ENCODE measurements at regions of chr1 and their contacts with region 1.

Region 1: GRCh38 chr1:207885129-207886032 is 25.5 kb downstream of the CD34 start:
- DNase-seq: peak; percentile 82
- H3K4me3 ChIP-seq: no peak overlapping the region; a peak in 1 of 4 replicates
- H3K27ac ChIP-seq: no peak overlapping the region
- H3K4me1 ChIP-seq: peaks cover 10 to 14% of the 10 kb centered on the region in 2 experiments
- H3K27me3 ChIP-seq: no peaks in the 10 kb centered on the region; the same call in 1 of the 2 replicates
- CTCF ChIP-seq: peak; percentile 95
- EP300 ChIP-seq: no peak
- RAD21 ChIP-seq: peak; percentile 91

Region 2: GRCh38 chr1:207868774-207869721 is 16.3 kb before region 1 on chr1:
- CTCF ChIA-PET with region 1: interaction called, 181 read pairs
- POLR2A ChIA-PET with region 1: no interaction called
- DNase-seq: peak; percentile 93
- H3K4me3 ChIP-seq: peak overlapping the region; percentile 78 to 85
- H3K27ac ChIP-seq: peak overlapping the region in 1 of 2 experiments; percentile 47; a peak in 1 of 4 replicates
- H3K4me1 ChIP-seq: peaks cover 0 to 32% of the 10 kb centered on the region in 2 experiments; a peak in 1 of 4 replicates
- H3K27me3 ChIP-seq: no peaks in the 10 kb centered on the region
- CTCF ChIP-seq: peak; percentile 62
- EP300 ChIP-seq: no peak
- RAD21 ChIP-seq: peak; percentile 54; the same call in 1 of the 2 replicates

Region 3: GRCh38 chr1:207910591-207911354 is 25.4 kb after region 1 on chr1 and contains the start of gene CD34:
- CTCF ChIA-PET with region 1: interaction called, 12 read pairs
- POLR2A ChIA-PET with region 1: no interaction called
- DNase-seq: peak; percentile 76
- H3K4me3 ChIP-seq: peak within 1 kb of the TSS; percentile 43 to 46
- H3K27ac ChIP-seq: no peak within 1 kb of the TSS
- H3K4me1 ChIP-seq: peaks cover 0 to 4% of the 10 kb centered on the region in 2 experiments; a peak in 1 of 4 replicates
- H3K27me3 ChIP-seq: peaks cover 11% of the 10 kb centered on the region; the same call in 1 of the 2 replicates
- CTCF ChIP-seq: no peak
- EP300 ChIP-seq: no peak
- RAD21 ChIP-seq: no peak
- polyA plus RNA-seq, gene CD34: 0.59 and 0.62 TPM in 2 replicates

Region 4: GRCh38 chr1:207952617-207953542 is 67.5 kb after region 1 on chr1:
- CTCF ChIA-PET with region 1: interaction called, 22 read pairs
- POLR2A ChIA-PET with region 1: no interaction called
- DNase-seq: no peak
- H3K4me3 ChIP-seq: no peak overlapping the region
- H3K27ac ChIP-seq: no peak overlapping the region
- H3K4me1 ChIP-seq: no peaks in the 10 kb centered on the region; a peak in 1 of 4 replicates
- H3K27me3 ChIP-seq: no peaks in the 10 kb centered on the region; the same call in 1 of the 2 replicates
- CTCF ChIP-seq: no peak
- EP300 ChIP-seq: no peak
- RAD21 ChIP-seq: no peak

Region 5: DNA sequence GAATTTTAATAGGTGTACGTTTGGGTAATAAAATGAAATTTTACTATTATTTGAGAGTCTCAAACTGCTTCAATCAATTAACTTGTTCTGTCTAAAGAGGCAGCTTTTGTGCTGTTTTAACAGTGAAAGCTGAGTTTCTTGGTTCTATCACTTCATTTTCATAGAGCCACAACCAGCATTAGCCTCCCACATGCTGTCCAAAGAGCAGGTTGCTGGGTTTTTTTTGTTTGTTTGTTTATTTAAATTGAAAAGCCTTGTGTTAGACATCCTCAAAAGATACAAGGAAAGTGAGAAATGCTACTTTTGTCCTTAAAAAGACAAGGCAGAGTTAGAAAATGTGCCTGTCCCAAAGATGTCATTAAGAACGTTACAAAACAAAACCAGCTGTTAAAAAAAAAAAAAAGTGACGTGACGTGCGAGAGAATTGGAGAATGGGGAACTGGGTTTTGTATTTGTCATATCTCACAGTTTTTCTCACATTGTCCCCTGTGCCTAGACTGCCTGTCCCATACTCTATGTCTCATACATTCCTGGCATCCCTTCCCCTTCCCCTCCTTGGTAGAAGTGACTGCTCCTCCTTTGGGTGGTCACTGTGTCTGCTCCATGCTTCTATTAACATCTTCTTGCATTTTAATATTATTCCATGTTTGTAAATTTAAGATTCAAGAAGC is 88.7 kb after region 1 on chr1:
- CTCF ChIA-PET with region 1: interaction called, 29 read pairs
- POLR2A ChIA-PET with region 1: no interaction called
- DNase-seq: no peak
- H3K4me3 ChIP-seq: no peak overlapping the region
- H3K27ac ChIP-seq: no peak overlapping the region
- H3K4me1 ChIP-seq: no peaks in the 10 kb centered on the region; a peak in 1 of 4 replicates
- H3K27me3 ChIP-seq: no peaks in the 10 kb centered on the region
- CTCF ChIP-seq: no peak
- EP300 ChIP-seq: no peak
- RAD21 ChIP-seq: no peak

Region 6: DNA sequence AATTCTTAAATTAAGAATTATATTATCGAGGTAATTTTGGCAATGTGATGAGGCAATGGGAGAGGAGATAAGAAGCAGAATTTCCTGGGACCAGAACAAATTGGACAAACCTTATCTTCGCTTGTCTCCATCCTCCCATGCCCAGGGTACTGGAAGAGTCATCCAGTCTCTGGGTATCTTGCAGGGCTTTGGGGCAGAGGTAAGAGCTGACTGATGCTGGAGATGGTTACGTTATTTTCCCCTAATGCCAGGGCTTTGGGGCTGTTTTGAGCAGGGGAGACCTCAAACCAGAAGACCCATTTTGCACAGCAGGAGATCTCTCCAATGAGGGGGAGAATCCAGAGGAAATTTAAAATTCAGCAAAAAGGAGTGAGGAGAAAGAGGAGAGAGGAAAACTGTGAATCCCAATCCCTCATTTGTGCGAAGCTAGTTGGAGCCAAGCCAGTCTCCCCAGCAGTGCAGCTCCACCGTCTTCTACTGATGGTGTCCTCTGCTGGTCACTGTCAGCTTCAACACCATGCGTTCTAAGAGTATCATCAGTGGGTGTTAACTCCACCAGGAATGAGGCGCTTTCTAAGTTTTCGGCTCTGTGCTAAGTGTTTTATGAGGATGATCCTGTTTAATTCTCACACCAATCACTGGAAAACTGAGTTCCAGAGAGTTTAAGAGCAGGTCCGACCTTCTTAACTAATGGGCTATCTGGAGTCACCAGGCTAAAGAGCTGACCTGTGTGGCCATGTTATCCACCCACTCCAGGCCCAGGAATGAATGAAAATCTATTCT is 112.3 kb after region 1 on chr1:
- CTCF ChIA-PET with region 1: interaction called, 35 read pairs
- POLR2A ChIA-PET with region 1: no interaction called
- DNase-seq: peak; percentile 74
- H3K4me3 ChIP-seq: no peak overlapping the region
- H3K27ac ChIP-seq: no peak overlapping the region
- H3K4me1 ChIP-seq: peaks cover 0 to 3% of the 10 kb centered on the region in 2 experiments; a peak in 2 of 4 replicates
- H3K27me3 ChIP-seq: no peaks in the 10 kb centered on the region
- CTCF ChIP-seq: peak; percentile 81
- EP300 ChIP-seq: no peak
- RAD21 ChIP-seq: peak; percentile 60

Measured in SK-N-SH (cell line).